Transverse colon (tissue), 4 donors: ENCODE measurements at regions of chr18 and their contacts with region 1.

Region 1: DNA sequence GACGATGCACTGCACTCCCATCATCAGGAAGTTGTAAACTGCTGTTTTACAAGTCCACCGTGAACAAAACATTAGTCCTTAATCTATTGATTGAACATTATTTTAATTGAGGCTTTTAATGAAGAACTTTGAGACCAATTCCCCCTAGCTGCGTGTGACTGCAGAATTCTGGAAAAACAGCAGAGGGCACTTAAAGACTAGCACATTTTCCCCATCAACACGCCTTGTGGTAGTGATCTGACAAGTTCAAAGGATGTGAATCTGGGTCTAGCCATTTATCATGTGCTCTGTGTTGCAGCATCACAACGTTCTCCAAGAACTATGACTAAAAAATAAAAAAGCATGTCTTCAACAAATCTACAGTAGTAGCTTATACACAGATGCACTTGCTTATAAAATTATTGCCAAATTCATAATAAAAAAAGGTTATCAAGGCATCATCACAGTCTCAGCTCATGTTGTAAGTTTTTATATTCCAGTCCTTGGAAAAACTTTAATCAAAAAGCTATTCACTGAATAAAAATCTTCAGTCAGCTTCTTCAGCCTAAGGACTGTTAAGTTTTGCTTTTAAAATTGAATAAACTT is 35.8 kb downstream of the SKOR2 start:
- DNase-seq: no peak
- H3K4me3 ChIP-seq: no peak overlapping the region
- H3K27ac ChIP-seq: no peak overlapping the region
- H3K4me1 ChIP-seq: no peaks in the 10 kb centered on the region
- H3K27me3 ChIP-seq: peaks cover 45% of the 10 kb centered on the region
- CTCF ChIP-seq: peak; percentile 27 to 61 (median 39)
- EP300 ChIP-seq: no peak
- POLR2A ChIP-seq: no peak

Region 2: DNA sequence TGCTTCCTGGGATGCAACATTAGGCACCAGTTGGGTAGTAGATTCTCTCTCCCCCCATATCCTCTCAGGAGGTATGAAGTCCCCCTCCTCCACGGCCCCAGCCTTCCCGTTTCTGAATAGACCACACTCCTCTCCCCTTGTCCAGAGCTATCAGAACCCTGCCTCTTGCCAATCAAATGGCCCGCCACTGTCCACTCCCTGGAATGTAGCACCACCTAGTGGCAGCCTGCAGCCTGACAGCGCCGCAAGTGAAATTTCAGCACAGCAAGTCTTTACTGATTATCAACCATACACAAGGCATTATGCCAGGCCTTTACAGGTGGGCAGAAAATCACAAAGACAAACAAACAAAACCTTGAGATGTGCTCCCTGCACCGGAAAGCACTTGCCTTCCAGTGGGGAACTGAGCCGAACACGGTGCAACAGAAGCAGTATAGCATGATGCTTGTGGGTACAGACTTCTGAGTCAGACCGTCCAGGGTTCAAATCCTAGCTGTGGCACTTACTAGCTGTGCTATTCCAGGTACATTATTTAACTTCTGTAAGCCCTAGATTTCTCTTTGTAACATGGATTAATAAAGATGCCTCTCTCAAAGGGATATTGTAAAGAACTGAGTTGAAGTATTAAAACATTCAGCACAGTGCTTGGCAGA is 540.8 kb after region 1 on chr18:
- in situ Hi-C with region 1: loop called in 3 of 4 experiments (anchors 10 to 25 kb)
- intact Hi-C with region 1: no loop called
- DNase-seq: peak; percentile 63
- H3K4me3 ChIP-seq: no peak overlapping the region
- H3K27ac ChIP-seq: no peak overlapping the region
- H3K4me1 ChIP-seq: no peaks in the 10 kb centered on the region
- H3K27me3 ChIP-seq: peaks cover 31% of the 10 kb centered on the region
- CTCF ChIP-seq: peak; percentile 69 to 90 (median 77)
- EP300 ChIP-seq: no peak
- POLR2A ChIP-seq: no peak